Activated CD4-positive, alpha-beta T cell treated with anti-CD3 and anti-CD28 coated beads for 36 hours (primary cell): ENCODE measurements at regions of chr6 and their contacts with region 1.

Region 1: GRCh38 chr6:168865-169455 is 123.3 kb upstream of the DUSP22 start:
- DNase-seq: no peak
- ATAC-seq: peak; percentile 47
- H3K4me3 Mint-ChIP-seq: no peak overlapping the region
- H3K27ac Mint-ChIP-seq: no peak overlapping the region
- H3K4me1 Mint-ChIP-seq: peaks cover 6% of the 10 kb centered on the region
- H3K27me3 Mint-ChIP-seq: peaks cover 1% of the 10 kb centered on the region

Region 2: DNA sequence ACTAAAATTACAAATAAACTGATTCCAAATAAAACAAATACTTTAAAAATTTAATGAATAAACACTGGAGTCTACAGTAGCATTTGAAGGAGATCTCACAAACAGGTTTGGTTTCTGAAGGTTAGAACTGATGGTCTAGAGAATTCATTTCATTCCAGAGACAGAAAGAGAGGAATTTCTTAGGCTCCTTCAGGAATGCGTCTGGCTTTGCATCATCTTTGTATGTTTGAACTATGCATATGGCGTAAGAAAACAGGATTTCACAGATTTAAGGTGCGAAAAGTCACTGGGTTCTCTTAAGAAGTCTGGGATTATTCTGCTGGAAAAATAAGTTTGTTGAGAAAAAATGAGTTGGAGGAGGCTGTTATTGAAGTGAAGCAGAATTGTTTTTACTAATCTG is 16.5 kb before region 1 on chr6:
- CTCF ChIA-PET with region 1: interaction called, 53 read pairs
- POLR2A ChIA-PET with region 1: no interaction called
- intact Hi-C with region 1: no loop called
- DNase-seq: no peak
- ATAC-seq: no peak
- H3K4me3 Mint-ChIP-seq: no peak overlapping the region
- H3K27ac Mint-ChIP-seq: no peak overlapping the region
- H3K4me1 Mint-ChIP-seq: peaks cover 22% of the 10 kb centered on the region
- H3K27me3 Mint-ChIP-seq: peaks cover 16% of the 10 kb centered on the region